Heart left ventricle (tissue), 16 donors: ENCODE measurements at regions of chr5 and their contacts with region 1.

Region 1: DNA sequence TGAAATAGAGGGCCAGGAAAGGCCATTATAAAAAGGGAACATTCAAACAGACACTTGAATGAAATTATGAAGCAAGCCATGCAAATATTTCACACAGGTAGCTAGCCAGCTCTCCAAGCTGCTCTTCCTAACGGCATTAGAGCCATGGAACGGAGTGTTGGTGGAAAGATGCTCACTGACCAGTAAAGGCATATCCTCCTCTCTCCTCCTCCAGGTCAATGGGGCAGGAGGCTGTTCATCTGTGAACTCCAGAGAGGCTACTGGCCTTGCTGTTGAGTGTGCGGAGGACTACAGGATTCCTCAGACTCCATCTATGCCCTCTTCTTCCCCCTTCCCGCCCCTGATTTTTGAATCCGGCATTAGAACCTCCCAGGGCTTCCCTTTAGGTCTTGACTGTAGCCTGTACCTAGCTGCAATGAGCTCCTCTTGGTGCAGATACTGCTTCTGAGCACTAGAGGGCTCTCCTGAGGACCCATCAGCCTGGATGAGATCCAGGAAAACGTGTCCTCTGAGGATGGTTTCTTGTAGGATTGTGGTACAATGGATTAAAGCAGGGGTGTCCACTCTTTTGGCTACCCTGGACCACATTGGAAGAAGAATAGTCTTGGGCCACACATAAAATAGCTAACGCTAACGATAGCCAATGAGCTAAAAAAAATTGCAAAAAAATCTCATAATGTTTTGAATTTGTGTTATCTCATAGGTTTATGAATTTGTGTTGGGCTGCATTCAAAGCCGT is 162.2 kb downstream of the SREK1 start:
- DNase-seq: peak in 4 of 5 donors; percentile 43 to 57 (median 48)
- ATAC-seq: peak; percentile 70 to 86 (median 78)
- H3K4me3 ChIP-seq: no peak overlapping the region
- H3K27ac ChIP-seq: peak overlapping the region in 4 of 12 donors; percentile 8 to 43 (median 22)
- H3K4me1 ChIP-seq: peaks cover 0 to 30% (median 15%) of the 10 kb centered on the region in 12 donors
- H3K27me3 ChIP-seq: no peaks in the 10 kb centered on the region
- CTCF ChIP-seq: peak; percentile 64 to 88 (median 80)
- POLR2A ChIP-seq: no peak

Region 2: DNA sequence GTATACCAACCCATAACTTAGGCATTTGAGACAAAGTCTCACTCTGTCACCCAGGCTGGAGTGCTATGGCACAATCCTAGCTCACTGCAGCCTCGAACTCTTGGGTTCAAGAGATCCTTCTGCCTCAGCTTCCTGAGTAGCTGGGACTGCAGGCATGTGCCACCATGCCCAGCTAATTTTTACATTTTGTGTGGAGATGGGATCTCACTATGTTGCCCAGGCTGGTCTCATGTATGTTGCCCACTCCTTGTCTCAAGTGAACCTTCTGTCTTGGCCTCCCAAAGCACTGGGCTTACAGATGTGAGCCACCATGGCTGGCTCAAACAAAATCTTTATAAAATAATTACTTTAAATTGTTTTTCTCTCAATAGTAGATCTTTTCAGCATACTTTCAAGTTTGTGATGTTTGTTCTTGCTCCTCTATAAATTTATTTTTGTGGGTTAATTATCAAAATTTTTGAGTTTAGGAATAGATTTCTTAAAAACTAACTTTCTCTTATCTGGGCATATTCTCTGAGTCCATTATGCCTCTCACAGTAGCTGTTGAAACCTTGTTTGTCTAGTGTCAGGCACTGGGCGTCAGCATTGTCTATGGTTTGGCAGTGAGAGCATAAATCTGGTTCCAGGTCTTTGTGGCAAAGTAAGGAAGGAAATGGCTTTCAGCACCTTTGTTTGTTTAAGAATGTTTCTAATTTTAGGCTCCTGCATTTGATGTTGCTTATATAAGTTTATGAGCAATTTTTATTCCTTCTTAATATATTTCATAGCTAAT is 545.6 kb before region 1 on chr5:
- intact Hi-C with region 1: loop called in 1 of 10 experiments (anchors 10 kb)
- DNase-seq: peak in 4 of 5 donors; percentile 26 to 45 (median 42)
- ATAC-seq: peak; percentile 71 to 93 (median 86)
- H3K4me3 ChIP-seq: no peak overlapping the region
- H3K27ac ChIP-seq: peak overlapping the region in 1 of 12 donors; percentile 26
- H3K4me1 ChIP-seq: peaks cover 0 to 11% (median 2%) of the 10 kb centered on the region in 12 donors
- H3K27me3 ChIP-seq: no peaks in the 10 kb centered on the region
- CTCF ChIP-seq: peak in 9 of 12 donors; percentile 28 to 67 (median 53)
- POLR2A ChIP-seq: no peak

Region 3: GRCh38 chr5:66164044-66164790 is 142.1 kb before region 1 on chr5:
- intact Hi-C with region 1: no loop called
- DNase-seq: no peak
- ATAC-seq: peak in 1 of 4 donors; percentile 24
- H3K4me3 ChIP-seq: no peak overlapping the region
- H3K27ac ChIP-seq: no peak overlapping the region
- H3K4me1 ChIP-seq: peaks cover 0 to 10% (median 0%) of the 10 kb centered on the region in 12 donors
- H3K27me3 ChIP-seq: no peaks in the 10 kb centered on the region
- CTCF ChIP-seq: no peak
- POLR2A ChIP-seq: no peak

Region 4: GRCh38 chr5:66440202-66440680 is 134.0 kb after region 1 on chr5:
- intact Hi-C with region 1: loop called in 3 of 10 experiments (anchors 5 kb)
- DNase-seq: peak in 4 of 5 donors; percentile 56 to 68 (median 64)
- ATAC-seq: peak; percentile 80 to 90 (median 86)
- H3K4me3 ChIP-seq: peak overlapping the region; percentile 21 to 61 (median 52)
- H3K27ac ChIP-seq: peak overlapping the region; percentile 28 to 85 (median 76)
- H3K4me1 ChIP-seq: peaks cover 0 to 20% (median 4%) of the 10 kb centered on the region in 12 donors
- H3K27me3 ChIP-seq: no peaks in the 10 kb centered on the region
- CTCF ChIP-seq: no peak
- POLR2A ChIP-seq: peak in 1 of 2 donors; percentile 73

Region 5: GRCh38 chr5:66595756-66596635 is 289.7 kb after region 1 on chr5 and contains the start of gene MAST4:
- intact Hi-C with region 1: loop called in 5 of 10 experiments (anchors 2 to 10 kb)
- DNase-seq: peak; percentile 92 to 95 (median 94)
- ATAC-seq: peak; percentile 93 to 97 (median 95)
- H3K4me3 ChIP-seq: peak within 1 kb of the TSS; percentile 69 to 97 (median 82)
- H3K27ac ChIP-seq: peak within 1 kb of the TSS; percentile 41 to 88 (median 71)
- H3K4me1 ChIP-seq: peaks cover 0 to 36% (median 12%) of the 10 kb centered on the region in 12 donors
- H3K27me3 ChIP-seq: peaks cover 0 to 41% (median 0%) of the 10 kb centered on the region in 9 donors
- CTCF ChIP-seq: no peak
- POLR2A ChIP-seq: peak; percentile 89 to 97
- total RNA-seq, gene MAST4: 54.9 to 96.2 (median 70.0) TPM

Region 6: GRCh38 chr5:66742083-66742895 is 436.0 kb after region 1 on chr5:
- intact Hi-C with region 1: loop called in 1 of 10 experiments (anchors 5 kb)
- DNase-seq: peak; percentile 25 to 80 (median 49)
- ATAC-seq: peak in 3 of 4 donors; percentile 53 to 74 (median 58)
- H3K4me3 ChIP-seq: no peak overlapping the region
- H3K27ac ChIP-seq: peak overlapping the region in 7 of 12 donors; percentile 3 to 67 (median 43)
- H3K4me1 ChIP-seq: peaks cover 9 to 63% (median 38%) of the 10 kb centered on the region in 12 donors
- H3K27me3 ChIP-seq: no peaks in the 10 kb centered on the region
- CTCF ChIP-seq: peak; percentile 22 to 60 (median 44)
- POLR2A ChIP-seq: no peak

Region 7: DNA sequence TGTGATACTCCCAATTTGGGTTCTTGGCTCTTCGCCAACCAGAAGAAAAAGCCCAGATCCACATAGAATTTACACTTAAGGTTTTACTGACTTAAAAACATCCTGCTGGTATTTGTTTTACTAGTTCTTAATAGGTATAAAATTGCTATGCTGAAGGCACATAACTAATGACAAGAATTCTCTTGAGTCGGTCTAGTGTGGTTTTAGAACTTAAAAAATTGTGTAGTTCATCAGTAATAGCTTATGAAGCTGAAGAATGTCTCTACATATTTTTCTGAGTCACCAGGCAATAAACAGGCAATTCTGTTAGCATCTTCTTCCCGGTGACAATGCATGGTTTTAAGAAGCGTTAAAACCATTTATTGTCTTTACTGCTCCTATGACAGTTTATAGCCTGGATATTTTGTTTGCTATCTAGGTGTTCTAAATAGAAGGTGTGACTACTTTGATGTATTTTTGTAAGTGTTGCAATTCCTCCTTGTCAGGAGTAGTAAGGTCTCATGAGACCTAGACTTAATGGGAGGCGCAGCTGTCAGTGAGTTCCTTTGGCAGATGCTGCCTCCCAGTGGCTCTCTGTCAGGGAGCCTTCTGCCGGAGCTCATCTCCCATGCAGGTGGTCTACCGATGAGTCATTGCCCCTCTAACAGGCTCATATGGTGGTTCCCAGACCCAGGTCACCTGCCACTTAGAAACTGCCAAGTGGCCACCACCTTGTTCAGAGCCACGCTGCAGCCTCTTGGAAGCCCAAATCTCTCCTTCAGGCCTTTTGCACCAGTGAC is 463.8 kb after region 1 on chr5:
- intact Hi-C with region 1: loop called in 2 of 10 experiments (anchors 5 kb)
- DNase-seq: peak in 4 of 5 donors; percentile 16 to 48 (median 39)
- ATAC-seq: peak; percentile 61 to 78 (median 72)
- H3K4me3 ChIP-seq: no peak overlapping the region
- H3K27ac ChIP-seq: peak overlapping the region in 2 of 12 donors; percentile 10 to 14
- H3K4me1 ChIP-seq: peaks cover 0 to 40% (median 14%) of the 10 kb centered on the region in 12 donors
- H3K27me3 ChIP-seq: no peaks in the 10 kb centered on the region
- CTCF ChIP-seq: peak in 10 of 12 donors; percentile 10 to 60 (median 46)
- POLR2A ChIP-seq: no peak

Region 8: GRCh38 chr5:67209142-67209771 is 903.0 kb after region 1 on chr5:
- intact Hi-C with region 1: loop called in 2 of 10 experiments (anchors 10 kb)
- DNase-seq: peak in 4 of 5 donors; percentile 52 to 68 (median 56)
- ATAC-seq: peak; percentile 55 to 87 (median 84)
- H3K4me3 ChIP-seq: no peak overlapping the region
- H3K27ac ChIP-seq: peak overlapping the region in 1 of 12 donors; percentile 18
- H3K4me1 ChIP-seq: peaks cover 0 to 47% (median 3%) of the 10 kb centered on the region in 12 donors
- H3K27me3 ChIP-seq: no peaks in the 10 kb centered on the region
- CTCF ChIP-seq: peak; percentile 66 to 84 (median 82)
- POLR2A ChIP-seq: no peak